ENCODE measurements at regions of chr7 and their contacts with region 1.

Region 1: DNA sequence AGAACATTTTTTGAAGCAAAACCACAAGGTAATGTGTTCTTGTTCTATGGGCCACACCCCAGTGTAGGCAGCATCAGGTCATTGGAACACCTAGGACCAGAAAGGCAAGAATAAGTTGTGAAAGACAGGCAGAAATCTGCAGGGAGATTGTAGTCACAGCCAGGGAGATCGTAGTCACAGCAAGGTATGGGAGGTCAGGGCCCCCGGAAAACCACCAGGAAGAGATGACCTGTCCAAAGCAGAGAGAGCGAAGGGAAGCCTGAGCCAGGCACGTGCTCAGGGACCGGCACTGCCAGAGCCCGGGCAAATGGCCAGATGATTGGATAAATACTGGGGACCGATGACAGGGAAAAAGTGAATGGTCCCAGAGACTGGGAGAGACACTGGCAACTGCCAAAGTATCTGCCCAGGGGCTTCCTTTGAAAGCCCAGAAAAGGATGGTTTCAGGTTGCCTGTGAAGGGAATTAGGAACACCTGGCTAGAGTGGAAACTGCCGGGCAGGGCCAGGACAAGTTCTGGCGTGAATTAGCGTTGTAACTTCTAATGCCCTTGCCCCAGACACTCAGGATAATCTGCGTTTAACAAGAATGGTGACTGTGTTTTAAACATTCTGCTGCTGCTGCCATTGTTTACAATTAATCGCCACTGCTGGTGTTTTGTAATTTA is 3.9 kb upstream of the NOBOX start:
- DNase-seq: no peak

Region 2: GRCh38 chr7:144459635-144460034 is 52.2 kb after region 1 on chr7:
- intact Hi-C with region 1: loop called in 1 of 2 experiments (anchors 2 kb)
- DNase-seq: no peak

Region 3: GRCh38 chr7:144513334-144513733 is 105.9 kb after region 1 on chr7:
- intact Hi-C with region 1: no loop called
- DNase-seq: no peak

Region 4: GRCh38 chr7:144534196-144534595 is 126.8 kb after region 1 on chr7:
- intact Hi-C with region 1: no loop called
- DNase-seq: no peak